WTC11 (cell line): ENCODE measurements at regions of chr20 and their contacts with region 1.

Region 1: DNA sequence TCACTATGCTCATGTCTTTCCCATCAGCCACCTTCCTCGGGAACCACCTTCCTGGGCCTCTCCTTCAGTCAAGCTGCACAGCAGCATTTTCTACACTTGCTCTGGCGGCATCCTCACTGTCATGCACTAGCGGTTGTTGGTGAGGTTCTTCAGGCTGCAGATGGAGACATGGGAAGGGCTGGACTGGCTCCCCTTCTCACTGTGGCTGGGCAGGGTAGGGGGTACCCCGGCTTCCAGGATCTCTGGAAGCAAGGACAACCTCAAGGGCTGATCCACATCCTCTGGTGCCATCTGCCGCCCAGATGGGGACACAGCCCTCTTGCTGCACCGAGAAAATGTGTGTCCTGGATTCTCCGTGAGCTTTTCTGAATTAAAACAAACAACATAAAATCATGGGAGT is 180.1 kb upstream of the RNF24 start:
- DNase-seq: peak; percentile 74
- ATAC-seq: peak; percentile 96
- H3K4me3 Mint-ChIP-seq: no peak overlapping the region
- H3K27ac Mint-ChIP-seq: no peak overlapping the region
- H3K4me1 Mint-ChIP-seq: peaks cover 8% of the 10 kb centered on the region
- H3K27me3 Mint-ChIP-seq: no peaks in the 10 kb centered on the region
- CTCF ChIP-seq: peak; percentile 54; the same call in 1 of the 2 replicates

Region 2: GRCh38 chr20:4091490-4092479 is 103.7 kb before region 1 on chr20:
- CTCF ChIA-PET with region 1: interaction called, 14 read pairs
- POLR2A ChIA-PET with region 1: no interaction called
- DNase-seq: peak; percentile 82
- ATAC-seq: peak; percentile 90
- H3K4me3 Mint-ChIP-seq: no peak overlapping the region
- H3K27ac Mint-ChIP-seq: no peak overlapping the region
- H3K4me1 Mint-ChIP-seq: no peaks in the 10 kb centered on the region; the same call in 1 of the 2 replicates
- H3K27me3 Mint-ChIP-seq: peaks cover under 1% of the 10 kb centered on the region
- CTCF ChIP-seq: peak; percentile 61

Region 3: GRCh38 chr20:4108495-4109306 is 86.8 kb before region 1 on chr20:
- CTCF ChIA-PET with region 1: interaction called, 51 read pairs
- POLR2A ChIA-PET with region 1: no interaction called
- DNase-seq: peak; percentile 77
- ATAC-seq: peak; percentile 93
- H3K4me3 Mint-ChIP-seq: no peak overlapping the region
- H3K27ac Mint-ChIP-seq: no peak overlapping the region
- H3K4me1 Mint-ChIP-seq: peaks cover 8% of the 10 kb centered on the region
- H3K27me3 Mint-ChIP-seq: no peaks in the 10 kb centered on the region
- CTCF ChIP-seq: peak; percentile 60

Region 4: DNA sequence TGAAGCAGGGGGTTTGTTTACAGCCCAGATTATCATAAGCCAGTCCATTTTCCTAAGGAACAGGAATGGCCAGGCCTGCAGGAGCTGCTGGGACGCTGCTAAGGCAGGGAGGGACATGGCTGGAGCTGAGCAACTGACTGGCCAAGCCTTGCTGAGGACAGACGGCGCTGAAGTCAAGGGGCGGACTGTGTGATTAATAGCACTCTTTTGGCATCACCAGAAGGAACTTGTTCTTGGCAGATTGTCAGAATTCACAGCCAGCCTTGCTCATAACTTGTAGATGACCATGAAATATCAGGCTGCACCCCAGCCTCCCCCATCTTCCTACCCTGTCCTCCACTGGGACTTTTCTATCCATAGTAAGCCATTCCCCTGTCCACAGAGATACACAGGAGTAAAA is 38.6 kb after region 1 on chr20:
- CTCF ChIA-PET with region 1: no interaction called
- POLR2A ChIA-PET with region 1: no interaction called
- DNase-seq: no peak
- ATAC-seq: no peak
- H3K4me3 Mint-ChIP-seq: no peak overlapping the region
- H3K27ac Mint-ChIP-seq: no peak overlapping the region
- H3K4me1 Mint-ChIP-seq: no peaks in the 10 kb centered on the region
- H3K27me3 Mint-ChIP-seq: no peaks in the 10 kb centered on the region; the same call in 1 of the 2 replicates
- CTCF ChIP-seq: no peak

Region 5: DNA sequence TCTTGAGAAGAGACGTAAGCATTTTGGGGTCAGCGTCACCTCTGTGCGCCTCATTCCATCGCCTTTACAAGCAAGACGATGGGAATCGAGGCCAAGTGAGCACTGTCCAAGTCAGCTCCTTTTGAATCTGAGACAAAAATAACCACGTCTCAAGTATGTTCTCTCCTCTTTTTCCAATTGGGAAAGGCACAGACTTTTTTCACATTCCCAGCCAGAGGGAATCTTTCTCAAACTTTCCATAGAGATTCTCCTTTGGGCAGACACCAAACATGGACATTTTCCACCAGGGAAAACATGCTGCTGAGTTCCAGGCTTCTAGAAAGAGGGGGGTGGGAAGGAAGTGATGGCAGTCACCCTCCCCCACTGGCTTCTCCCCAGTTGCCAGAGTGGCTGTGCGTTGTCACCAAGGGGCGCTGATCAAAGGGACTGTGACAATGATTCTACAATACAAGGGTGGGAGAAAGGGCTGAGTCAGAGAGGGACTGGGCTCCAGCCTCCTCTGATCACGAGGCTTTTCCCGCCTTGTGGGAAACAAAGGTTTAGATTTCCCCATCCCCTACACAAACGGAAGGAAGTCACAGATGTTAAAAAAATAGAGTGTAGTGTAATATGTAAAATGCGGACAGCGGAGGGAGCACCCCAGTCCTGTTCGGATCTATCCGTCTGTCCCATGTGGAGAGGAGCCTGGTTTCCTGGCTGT is 101.8 kb after region 1 on chr20:
- CTCF ChIA-PET with region 1: no interaction called
- POLR2A ChIA-PET with region 1: no interaction called
- DNase-seq: no peak
- ATAC-seq: peak; percentile 41; the same call in 1 of the 2 replicates
- H3K4me3 Mint-ChIP-seq: no peak overlapping the region
- H3K27ac Mint-ChIP-seq: no peak overlapping the region
- H3K4me1 Mint-ChIP-seq: peaks cover 6% of the 10 kb centered on the region
- H3K27me3 Mint-ChIP-seq: peaks cover 10% of the 10 kb centered on the region
- CTCF ChIP-seq: no peak

Region 6: GRCh38 chr20:4320291-4320690 is 124.8 kb after region 1 on chr20:
- CTCF ChIA-PET with region 1: no interaction called
- POLR2A ChIA-PET with region 1: no interaction called
- DNase-seq: no peak
- ATAC-seq: no peak
- H3K4me3 Mint-ChIP-seq: no peak overlapping the region
- H3K27ac Mint-ChIP-seq: no peak overlapping the region
- H3K4me1 Mint-ChIP-seq: no peaks in the 10 kb centered on the region
- H3K27me3 Mint-ChIP-seq: peaks cover 3% of the 10 kb centered on the region; the same call in 1 of the 2 replicates
- CTCF ChIP-seq: no peak